Activated CD8-positive, alpha-beta T cell treated with anti-CD3 and anti-CD28 coated beads, Interleukin-2, amount 10 ng/mL, durations not matched to agents 7 days and 5 days (primary cell): ENCODE measurements at regions of chr9 and their contacts with region 1.

Region 1: DNA sequence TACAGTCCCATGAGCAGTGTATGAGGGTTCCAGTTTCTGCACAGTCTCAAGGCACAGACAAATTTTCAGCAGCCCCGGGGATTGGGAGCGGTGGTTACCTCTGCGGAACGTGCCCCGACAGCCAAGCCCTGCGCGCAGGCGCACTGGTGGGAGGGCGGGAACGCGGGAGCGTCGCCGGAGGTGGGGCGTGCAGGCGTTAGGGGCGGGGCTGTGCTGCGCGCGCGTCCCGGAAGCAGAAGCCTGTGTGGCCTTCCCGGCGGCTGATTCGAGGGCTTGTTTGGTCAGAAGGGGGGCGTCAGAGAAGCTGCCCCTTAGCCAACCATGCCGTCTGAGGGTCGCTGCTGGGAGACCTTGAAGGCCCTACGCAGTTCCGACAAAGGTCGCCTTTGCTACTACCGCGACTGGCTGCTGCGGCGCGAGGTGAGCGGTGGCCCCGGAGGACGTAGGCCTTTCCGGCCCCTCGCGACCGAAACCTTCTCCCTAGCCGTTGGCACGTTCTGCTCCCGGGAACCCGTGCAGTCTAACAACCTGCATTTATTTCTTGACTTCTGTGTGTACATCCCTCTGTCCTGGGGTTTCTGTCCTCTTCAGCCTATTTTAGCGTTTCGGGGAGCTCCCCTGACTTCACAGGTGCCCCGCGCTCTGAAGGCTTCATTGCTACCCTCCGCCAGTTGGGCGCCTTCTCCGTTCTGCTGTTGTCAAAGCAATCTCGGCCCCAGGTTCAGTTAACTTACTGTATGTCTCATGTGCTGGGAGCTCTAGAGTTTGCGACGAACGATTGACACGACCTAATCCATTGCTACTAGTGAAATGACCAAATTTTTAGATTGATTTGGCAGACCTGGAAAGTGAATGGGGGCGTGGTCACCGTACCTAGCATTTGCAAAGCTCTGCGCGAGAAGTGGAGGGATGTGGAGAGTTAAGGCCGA is at the start of gene GLE1:
- DNase-seq: peak; percentile 97
- ATAC-seq: peak; percentile 93
- H3K4me3 Mint-ChIP-seq: peak within 1 kb of the TSS; percentile 100
- H3K27ac Mint-ChIP-seq: peak within 1 kb of the TSS; percentile 99
- H3K4me1 Mint-ChIP-seq: peaks cover 19% of the 10 kb centered on the region
- H3K27me3 Mint-ChIP-seq: no peaks in the 10 kb centered on the region
- total RNA-seq, gene GLE1: 46.5 to 47.7 TPM

Region 2: GRCh38 chr9:128494108-128494745 is 10.5 kb before region 1 on chr9:
- CTCF ChIA-PET with region 1: no interaction called
- POLR2A ChIA-PET with region 1: interaction called, 15 read pairs
- DNase-seq: no peak
- ATAC-seq: no peak
- H3K4me3 Mint-ChIP-seq: no peak overlapping the region
- H3K27ac Mint-ChIP-seq: no peak overlapping the region
- H3K4me1 Mint-ChIP-seq: peaks cover 3% of the 10 kb centered on the region
- H3K27me3 Mint-ChIP-seq: no peaks in the 10 kb centered on the region

Region 3: DNA sequence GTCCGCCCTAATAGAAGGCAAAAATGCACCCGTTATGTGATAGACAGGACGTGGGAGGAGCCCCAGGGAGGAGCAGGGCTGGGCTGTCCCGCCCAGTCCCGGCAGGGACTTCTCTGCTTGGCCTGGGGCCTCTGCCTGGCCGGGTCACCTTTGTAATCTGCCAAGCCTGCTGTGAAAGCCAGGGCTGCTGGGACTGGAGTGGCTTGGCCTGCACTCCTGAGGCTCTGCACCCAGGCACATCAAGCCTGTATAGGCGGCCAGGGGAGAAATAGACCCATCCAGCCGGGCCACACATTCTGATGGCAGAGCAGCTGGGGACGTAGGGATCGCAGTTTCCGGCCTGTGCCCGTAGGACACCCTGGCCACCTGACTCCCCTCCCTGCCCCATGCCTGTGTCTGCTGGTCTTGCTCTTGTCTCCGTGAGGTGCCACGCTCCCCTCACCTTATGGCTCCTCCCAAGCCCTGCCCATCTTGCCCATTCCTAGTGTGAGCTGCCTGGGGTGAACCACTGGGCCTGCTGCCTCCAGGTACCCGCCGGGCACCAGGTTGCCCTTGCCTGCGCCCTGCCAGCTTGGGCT is 123.8 kb after region 1 on chr9:
- CTCF ChIA-PET with region 1: no interaction called
- POLR2A ChIA-PET with region 1: no interaction called
- DNase-seq: no peak
- ATAC-seq: no peak
- H3K4me3 Mint-ChIP-seq: no peak overlapping the region
- H3K27ac Mint-ChIP-seq: peak overlapping the region; percentile 0
- H3K4me1 Mint-ChIP-seq: no peaks in the 10 kb centered on the region
- H3K27me3 Mint-ChIP-seq: no peaks in the 10 kb centered on the region

Region 4: DNA sequence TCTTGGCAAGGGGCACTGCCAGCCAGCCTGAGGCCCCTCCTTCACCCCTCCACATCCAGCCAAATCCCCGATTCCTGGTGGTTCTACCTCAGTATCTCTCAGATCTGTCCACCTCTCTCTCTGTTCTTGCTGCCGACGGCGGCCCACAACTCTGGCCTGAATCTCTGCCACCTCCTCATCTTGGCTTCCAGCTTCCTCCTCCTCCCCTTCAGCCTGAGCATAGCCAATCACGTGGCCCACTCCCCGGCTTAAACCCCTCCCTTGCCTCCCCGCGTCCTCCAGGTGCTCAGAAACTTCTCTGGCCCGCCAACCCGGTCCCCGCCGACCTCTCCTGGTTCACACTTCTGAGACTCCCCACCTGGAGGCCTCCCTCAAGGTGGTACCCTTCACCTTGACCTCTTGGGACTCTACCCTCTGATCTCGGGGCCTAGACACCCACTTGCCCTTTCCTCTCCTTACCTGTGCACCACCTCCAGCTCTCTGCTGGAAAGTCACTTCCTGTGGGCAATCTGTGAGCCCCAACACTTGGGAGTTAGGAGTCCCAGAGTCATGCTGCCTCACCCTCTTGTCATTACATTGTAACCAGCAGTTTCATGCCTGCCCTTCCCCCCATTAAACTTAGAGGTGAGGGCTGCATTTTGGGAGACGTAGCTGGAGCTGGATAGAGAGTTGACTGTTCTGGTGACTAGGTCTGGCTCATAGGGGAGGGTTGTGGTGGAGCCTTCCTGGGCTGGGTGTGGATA is 179.7 kb after region 1 on chr9:
- CTCF ChIA-PET with region 1: no interaction called
- POLR2A ChIA-PET with region 1: no interaction called
- DNase-seq: peak; percentile 89
- ATAC-seq: peak; percentile 66
- H3K4me3 Mint-ChIP-seq: peak overlapping the region; percentile 91
- H3K27ac Mint-ChIP-seq: peak overlapping the region; percentile 88
- H3K4me1 Mint-ChIP-seq: peaks cover 53% of the 10 kb centered on the region
- H3K27me3 Mint-ChIP-seq: no peaks in the 10 kb centered on the region